ENCODE measurements at regions of chr1 and their contacts with region 1.

Region 1: GRCh38 chr1:3796215-3797061 is at the start of gene LRRC47:
- DNase-seq: peak; percentile 92
- H3K4me3 Mint-ChIP-seq: peak within 1 kb of the TSS; percentile 91
- H3K27ac Mint-ChIP-seq: peak within 1 kb of the TSS; percentile 89
- H3K4me1 Mint-ChIP-seq: peaks cover 42% of the 10 kb centered on the region
- H3K27me3 Mint-ChIP-seq: peaks cover 5% of the 10 kb centered on the region
- total RNA-seq, gene LRRC47: 45.2 and 50.1 TPM in 2 replicates

Region 2: DNA sequence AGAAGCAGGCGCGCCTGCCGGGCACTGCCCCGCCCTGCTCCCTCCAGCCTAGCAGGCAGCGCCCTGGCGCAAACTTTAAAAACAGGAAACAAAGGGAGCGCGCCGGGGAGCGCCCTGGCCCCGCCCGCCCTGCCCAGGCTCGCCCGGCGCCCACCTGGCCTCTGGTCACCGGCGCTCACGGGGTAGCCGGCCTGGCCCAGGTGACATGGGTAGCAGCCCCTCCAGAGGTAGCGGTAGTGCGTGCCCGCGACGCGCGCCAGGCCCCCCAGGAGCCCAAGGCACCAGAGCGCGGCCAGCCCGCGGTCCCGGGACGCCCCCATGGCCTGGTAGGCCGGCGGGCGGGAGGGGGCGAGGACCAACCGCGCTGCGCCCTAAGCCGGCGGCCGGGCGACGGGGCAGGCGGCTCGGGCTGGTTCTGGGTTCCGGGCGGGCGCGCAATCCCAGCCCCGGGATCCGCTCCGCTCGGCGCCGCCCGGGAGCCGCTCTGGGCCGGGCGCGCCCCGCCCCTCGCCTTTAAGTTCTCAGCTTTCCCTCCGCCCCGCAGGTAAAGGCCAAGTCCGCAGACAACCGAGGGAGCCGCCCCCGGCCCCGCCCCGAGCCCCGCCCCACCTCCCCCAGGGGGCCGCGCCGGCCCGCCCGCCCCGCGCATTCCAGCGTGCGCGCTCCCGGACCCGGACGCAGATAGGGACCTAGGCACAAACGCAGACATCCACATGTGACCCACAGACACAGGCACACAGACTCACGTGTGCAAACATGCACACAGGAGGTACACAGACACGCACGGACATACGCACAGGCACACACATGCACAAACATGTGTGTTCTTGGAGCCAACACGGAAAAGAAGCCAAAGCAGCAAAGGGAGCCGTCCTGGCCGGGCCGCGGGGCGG is 265.3 kb before region 1 on chr1:
- intact Hi-C with region 1: loop called (anchors 5 kb)
- DNase-seq: peak; percentile 63
- H3K4me3 Mint-ChIP-seq: peak overlapping the region; percentile 78
- H3K27ac Mint-ChIP-seq: peak overlapping the region; percentile 87
- H3K4me1 Mint-ChIP-seq: no peaks in the 10 kb centered on the region
- H3K27me3 Mint-ChIP-seq: peaks cover 2% of the 10 kb centered on the region

Region 3: GRCh38 chr1:3649342-3650247 is 146.8 kb before region 1 on chr1 and contains the start of gene WRAP73:
- intact Hi-C with region 1: loop called (anchors 2 kb)
- DNase-seq: peak; percentile 86
- H3K4me3 Mint-ChIP-seq: peak within 1 kb of the TSS; percentile 84
- H3K27ac Mint-ChIP-seq: peak within 1 kb of the TSS; percentile 58
- H3K4me1 Mint-ChIP-seq: peaks cover 23% of the 10 kb centered on the region
- H3K27me3 Mint-ChIP-seq: peaks cover 25% of the 10 kb centered on the region
- total RNA-seq, gene WRAP73: 44.9 and 45.5 TPM in 2 replicates

Region 4: DNA sequence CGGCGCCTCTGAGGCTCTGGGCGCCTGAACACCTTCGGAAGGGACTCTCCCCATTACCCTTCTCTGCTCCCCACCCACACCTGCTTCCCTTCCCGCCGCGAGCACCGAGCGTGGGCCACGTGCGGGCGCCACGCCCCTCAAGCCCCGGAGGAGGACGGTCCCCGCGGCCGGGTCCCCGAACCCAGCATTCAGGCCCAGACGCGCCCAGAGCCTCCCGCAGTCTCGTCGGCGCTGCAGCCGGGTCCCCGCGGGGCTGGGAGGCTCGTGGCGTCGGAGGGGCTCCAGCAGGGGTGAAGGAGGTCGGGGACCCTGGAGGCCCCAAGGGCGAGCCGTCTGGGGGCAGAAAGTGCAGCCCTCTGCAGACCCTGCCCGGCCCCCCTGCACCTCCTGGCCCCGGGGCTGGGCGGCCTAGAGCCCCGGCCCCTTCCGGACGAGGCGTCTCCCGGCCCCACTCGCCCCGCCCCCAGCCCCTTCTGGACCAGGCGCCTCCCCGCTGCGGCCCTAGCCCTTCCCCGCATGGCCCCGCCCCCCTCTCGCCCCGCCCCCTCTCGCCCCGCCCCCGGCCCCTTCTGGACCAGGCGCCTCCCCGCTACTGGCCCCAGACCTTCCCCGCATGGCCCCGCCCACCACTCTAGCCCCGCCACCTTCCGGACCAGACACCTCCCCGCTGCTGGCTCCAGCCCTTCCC is 24.3 kb before region 1 on chr1:
- intact Hi-C with region 1: loop called (anchors 1 kb)
- DNase-seq: peak; percentile 80
- H3K4me3 Mint-ChIP-seq: peak overlapping the region; percentile 75
- H3K27ac Mint-ChIP-seq: peak overlapping the region; percentile 52
- H3K4me1 Mint-ChIP-seq: peaks cover 8% of the 10 kb centered on the region
- H3K27me3 Mint-ChIP-seq: peaks cover 9% of the 10 kb centered on the region

Measured in activated T-helper 1 cell treated with anti-CD3 and anti-CD28 coated beads, Interleukin-12 subunit alpha, Interleukin-12 subunit beta, Interleukin-2, Interleukin-4 antibody, amounts not matched to agents 30 ng/mL and 10 ng/mL and 1 ng/mL, durations not matched to agents 14 hours and 24 hours and 36 hours (primary cell).